ENCODE measurements at regions of chr15 and their contacts with region 1.

Region 1: GRCh38 chr15:28208583-28208982 is 109.5 kb upstream of the OCA2 start:
- DNase-seq: peak in 1 of 2 donors; percentile 26
- ATAC-seq: peak in 7 of 8 donors; percentile 28 to 88 (median 75)
- H3K4me3 ChIP-seq: no peak overlapping the region
- H3K27ac ChIP-seq: no peak overlapping the region
- H3K4me1 ChIP-seq: peaks cover 0 to 4% (median 0%) of the 10 kb centered on the region in 9 donors
- H3K27me3 ChIP-seq: no peaks in the 10 kb centered on the region
- CTCF ChIP-seq: no peak

Region 2: GRCh38 chr15:28023933-28024888 is 184.4 kb before region 1 on chr15:
- intact Hi-C with region 1: no loop called
- DNase-seq: no peak
- ATAC-seq: no peak
- H3K4me3 ChIP-seq: no peak overlapping the region
- H3K27ac ChIP-seq: no peak overlapping the region
- H3K4me1 ChIP-seq: no peaks in the 10 kb centered on the region
- H3K27me3 ChIP-seq: no peaks in the 10 kb centered on the region
- CTCF ChIP-seq: no peak

Region 3: GRCh38 chr15:28243399-28243798 is 34.8 kb after region 1 on chr15:
- intact Hi-C with region 1: no loop called
- DNase-seq: no peak
- ATAC-seq: no peak
- H3K4me3 ChIP-seq: no peak overlapping the region
- H3K27ac ChIP-seq: no peak overlapping the region
- H3K4me1 ChIP-seq: no peaks in the 10 kb centered on the region
- H3K27me3 ChIP-seq: no peaks in the 10 kb centered on the region
- CTCF ChIP-seq: no peak

Region 4: GRCh38 chr15:28255965-28256364 is 47.4 kb after region 1 on chr15:
- intact Hi-C with region 1: loop called in 1 of 10 experiments (anchors 5 kb)
- DNase-seq: no peak
- ATAC-seq: no peak
- H3K4me3 ChIP-seq: no peak overlapping the region
- H3K27ac ChIP-seq: no peak overlapping the region
- H3K4me1 ChIP-seq: peaks cover 0 to 10% (median 6%) of the 10 kb centered on the region in 9 donors
- H3K27me3 ChIP-seq: no peaks in the 10 kb centered on the region
- CTCF ChIP-seq: no peak

Measured in heart right ventricle (tissue), 16 donors.